Ascending aorta (tissue), 2 donors: ENCODE measurements at regions of chr10 and their contacts with region 1.

Region 1: GRCh38 chr10:102503281-102504220 is at the start of gene SUFU:
- DNase-seq: peak; percentile 96 to 99
- H3K4me3 ChIP-seq: peak within 1 kb of the TSS; percentile 93 to 100
- H3K27ac ChIP-seq: peak within 1 kb of the TSS; percentile 66 to 94
- H3K4me1 ChIP-seq: peaks cover 9 to 15% of the 10 kb centered on the region in 2 donors
- H3K27me3 ChIP-seq: no peaks in the 10 kb centered on the region
- CTCF ChIP-seq: peak; percentile 83 to 93 (median 87)
- total RNA-seq, gene SUFU: 17.3 TPM

Region 2: GRCh38 chr10:102225646-102226541 is 277.7 kb before region 1 on chr10 and contains the start of gene ELOVL3:
- intact Hi-C with region 1: loop called (anchors 2 kb)
- DNase-seq: peak; percentile 72 to 94
- H3K4me3 ChIP-seq: peak within 1 kb of the TSS; percentile 34 to 53
- H3K27ac ChIP-seq: peak within 1 kb of the TSS; percentile 39 to 70
- H3K4me1 ChIP-seq: peaks cover 10 to 21% of the 10 kb centered on the region in 2 donors
- H3K27me3 ChIP-seq: peaks cover 9% of the 10 kb centered on the region
- CTCF ChIP-seq: no peak
- total RNA-seq, gene ELOVL3: not detected

Region 3: DNA sequence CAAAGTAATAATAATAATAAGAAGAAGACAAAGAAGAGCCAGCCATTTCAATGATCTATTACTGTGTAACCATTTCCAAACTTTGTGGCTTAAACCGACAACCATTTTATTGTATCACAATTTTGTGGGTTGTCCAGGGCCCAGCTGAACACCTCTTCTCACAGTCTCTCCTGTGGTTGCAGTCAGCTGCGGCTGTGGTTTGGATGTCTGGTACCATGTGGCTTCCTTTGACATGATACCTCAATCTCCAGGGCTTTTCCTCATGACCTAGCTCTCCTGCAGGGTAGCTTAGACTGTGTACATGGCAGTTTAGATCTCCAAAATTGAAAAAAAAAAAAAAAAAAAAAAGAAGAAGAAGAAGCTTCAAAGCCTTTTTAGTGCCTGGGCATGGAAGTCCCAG is 180.6 kb before region 1 on chr10:
- intact Hi-C with region 1: no loop called
- DNase-seq: no peak
- H3K4me3 ChIP-seq: no peak overlapping the region
- H3K27ac ChIP-seq: no peak overlapping the region
- H3K4me1 ChIP-seq: no peaks in the 10 kb centered on the region
- H3K27me3 ChIP-seq: no peaks in the 10 kb centered on the region
- CTCF ChIP-seq: no peak

Region 4: DNA sequence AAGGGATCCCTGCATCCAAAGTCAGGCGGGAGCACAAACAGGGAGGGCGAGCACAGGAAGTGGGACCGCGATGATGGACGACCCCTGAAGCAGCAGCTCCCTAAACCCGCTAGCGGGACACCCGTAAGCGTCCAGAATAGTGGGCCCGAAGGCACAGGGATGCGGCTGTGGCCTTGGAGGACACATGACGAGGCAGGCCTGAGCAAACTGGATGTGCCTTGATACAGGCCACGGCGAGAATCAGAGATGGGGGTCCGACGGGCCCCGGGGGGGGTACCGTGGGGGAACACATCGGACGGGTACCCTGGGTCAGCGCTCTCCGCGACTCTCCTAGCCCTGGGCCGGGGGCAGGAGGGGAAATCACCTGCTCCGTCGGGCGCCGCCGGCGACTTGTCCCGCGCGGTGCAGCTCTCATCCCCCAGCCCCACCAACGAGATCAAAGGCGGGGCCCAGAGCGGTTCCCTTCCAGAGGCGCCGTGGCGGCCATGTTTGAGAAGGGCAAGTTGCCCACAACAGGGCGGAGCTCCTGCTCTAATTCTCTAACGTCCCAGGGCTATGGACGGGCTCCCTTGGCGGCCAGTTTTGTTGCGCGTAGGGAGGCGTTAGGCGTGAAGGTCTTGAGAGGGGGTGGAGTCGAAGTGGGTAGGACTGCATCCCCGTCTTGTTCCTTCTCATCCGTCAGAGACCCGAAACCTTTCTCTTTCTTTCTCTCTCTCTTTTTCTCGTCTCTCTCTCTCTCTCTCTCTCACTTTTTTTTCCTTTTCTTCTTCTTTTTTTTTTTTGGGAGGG is 71.2 kb before region 1 on chr10 and contains the start of gene CUEDC2:
- intact Hi-C with region 1: loop called (anchors 1 kb)
- DNase-seq: peak; percentile 84 to 98
- H3K4me3 ChIP-seq: peak within 1 kb of the TSS; percentile 92 to 98
- H3K27ac ChIP-seq: peak within 1 kb of the TSS; percentile 79
- H3K4me1 ChIP-seq: peaks cover 8 to 14% of the 10 kb centered on the region in 2 donors
- H3K27me3 ChIP-seq: no peaks in the 10 kb centered on the region
- CTCF ChIP-seq: no peak
- total RNA-seq, gene CUEDC2: 45.1 TPM

Region 5: GRCh38 chr10:102583435-102584417 is 80.2 kb after region 1 on chr10:
- intact Hi-C with region 1: loop called (anchors 1 kb)
- DNase-seq: peak; percentile 34 to 93
- H3K4me3 ChIP-seq: no peak overlapping the region
- H3K27ac ChIP-seq: no peak overlapping the region
- H3K4me1 ChIP-seq: no peaks in the 10 kb centered on the region
- H3K27me3 ChIP-seq: no peaks in the 10 kb centered on the region
- CTCF ChIP-seq: peak; percentile 82 to 90 (median 84)

Region 6: DNA sequence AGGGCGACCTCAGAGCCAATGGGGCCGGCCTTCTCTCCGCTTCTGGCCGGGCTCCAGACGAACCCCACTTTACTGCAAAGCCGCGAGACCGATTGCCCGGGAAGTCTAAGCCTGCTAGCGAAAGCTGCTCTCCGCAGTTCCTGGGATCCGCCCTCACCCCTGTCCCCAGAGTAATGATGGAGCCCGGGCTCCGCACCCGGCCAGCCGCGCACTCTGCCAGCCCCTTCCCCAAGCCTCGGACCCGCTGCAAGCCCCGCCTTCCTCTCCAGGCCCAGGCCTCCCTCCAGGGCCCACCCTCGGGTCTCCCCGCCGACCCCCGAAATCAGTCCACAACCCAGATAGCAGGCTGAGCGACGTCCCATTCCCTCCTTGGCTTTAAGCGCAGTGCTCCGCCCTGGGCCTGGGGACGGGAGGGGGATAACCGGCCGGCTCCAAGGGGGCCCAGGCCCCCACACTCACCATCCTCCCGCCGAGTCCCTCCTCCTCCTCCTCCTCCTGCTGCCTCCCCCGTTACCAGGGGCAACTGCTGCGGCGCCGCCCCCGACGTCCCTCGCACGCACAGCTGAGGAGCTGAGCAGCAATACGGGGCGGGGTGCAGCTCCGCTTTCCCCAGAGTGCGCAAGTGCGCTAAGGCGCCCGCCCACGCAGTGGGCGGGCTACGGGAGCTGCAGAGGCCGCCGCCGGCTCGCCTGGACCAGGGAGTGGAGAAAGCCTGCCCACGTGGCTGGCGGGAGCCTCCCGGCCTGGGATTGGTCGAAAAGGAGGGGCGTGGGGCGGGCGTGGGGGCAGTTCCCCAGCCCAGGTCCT is 210.5 kb after region 1 on chr10 and contains the start of gene ARL3:
- intact Hi-C with region 1: loop called (anchors 2 kb)
- DNase-seq: peak; percentile 94 to 98
- H3K4me3 ChIP-seq: peak within 1 kb of the TSS; percentile 84 to 91
- H3K27ac ChIP-seq: peak within 1 kb of the TSS; percentile 79 to 83
- H3K4me1 ChIP-seq: peaks cover 0 to 13% of the 10 kb centered on the region in 2 donors
- H3K27me3 ChIP-seq: no peaks in the 10 kb centered on the region
- CTCF ChIP-seq: peak; percentile 21 to 42 (median 39)
- total RNA-seq, gene ARL3: 2.0 TPM